ENCODE measurements at regions of chr7 and their contacts with region 1.

Region 1: GRCh38 chr7:18320971-18321567 is 174.5 kb upstream of the HDAC9 start:
- DNase-seq: peak; percentile 64 to 73 (median 71)
- H3K4me3 ChIP-seq: no peak overlapping the region
- H3K27ac ChIP-seq: no peak overlapping the region
- H3K4me1 ChIP-seq: peaks cover 0 to 16% (median 8%) of the 10 kb centered on the region in 4 experiments
- H3K27me3 ChIP-seq: no peaks in the 10 kb centered on the region

Region 2: GRCh38 chr7:18117482-18117881 is 203.6 kb before region 1 on chr7:
- CTCF ChIA-PET with region 1: no interaction called
- POLR2A ChIA-PET with region 1: no interaction called
- DNase-seq: no peak
- H3K4me3 ChIP-seq: no peak overlapping the region
- H3K27ac ChIP-seq: no peak overlapping the region
- H3K4me1 ChIP-seq: no peaks in the 10 kb centered on the region
- H3K27me3 ChIP-seq: no peaks in the 10 kb centered on the region

Region 3: DNA sequence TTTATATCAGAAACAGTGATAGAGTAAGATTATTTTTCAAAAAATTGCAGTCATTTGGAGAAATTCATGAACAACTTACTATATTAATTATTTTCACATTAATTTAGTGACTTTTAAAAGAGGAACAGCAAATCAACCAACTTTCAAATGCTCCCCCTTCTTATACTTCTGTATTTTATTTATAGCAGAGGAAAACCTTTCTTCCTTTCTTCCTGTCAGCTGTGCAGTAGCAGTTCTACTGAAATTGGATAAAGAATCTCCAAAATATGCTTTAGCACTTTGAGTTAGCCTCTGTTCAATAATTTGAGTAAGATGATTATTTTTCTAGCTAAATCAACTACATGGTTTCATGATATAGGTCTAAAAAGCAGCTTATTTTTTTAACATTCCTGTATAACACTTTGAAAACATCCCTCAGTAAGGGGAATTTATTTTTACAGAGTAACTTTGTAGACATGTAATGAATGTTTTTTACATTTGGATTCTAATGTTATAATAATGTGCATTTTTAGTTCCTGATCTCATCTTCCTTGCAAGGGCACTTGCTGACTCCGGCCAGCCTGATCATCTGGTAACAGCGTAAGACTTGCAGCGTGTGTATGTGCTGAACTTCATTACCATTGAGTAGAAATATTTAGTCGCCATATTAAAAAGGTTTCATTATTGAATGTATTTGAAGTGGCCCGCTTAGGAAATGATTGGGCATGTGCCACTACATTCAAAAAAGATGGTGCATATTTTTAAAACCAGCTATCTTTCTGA is 16.2 kb after region 1 on chr7:
- CTCF ChIA-PET with region 1: interaction called, 11 read pairs
- POLR2A ChIA-PET with region 1: no interaction called
- DNase-seq: peak; percentile 34 to 82 (median 66)
- H3K4me3 ChIP-seq: peak overlapping the region in 6 of 7 experiments; percentile 30 to 76 (median 54)
- H3K27ac ChIP-seq: peak overlapping the region; percentile 27 to 44
- H3K4me1 ChIP-seq: peaks cover 2 to 41% (median 27%) of the 10 kb centered on the region in 4 experiments
- H3K27me3 ChIP-seq: no peaks in the 10 kb centered on the region